ENCODE measurements at regions of chr13 and their contacts with region 1.

Region 1: GRCh38 chr13:67792151-67792676 is 562.1 kb upstream of the PCDH9 start:
- DNase-seq: no peak
- ATAC-seq: no peak
- H3K4me3 ChIP-seq: no peak overlapping the region
- H3K27ac ChIP-seq: no peak overlapping the region
- H3K4me1 ChIP-seq: no peaks in the 10 kb centered on the region
- H3K27me3 ChIP-seq: no peaks in the 10 kb centered on the region
- CTCF ChIP-seq: no peak

Region 2: DNA sequence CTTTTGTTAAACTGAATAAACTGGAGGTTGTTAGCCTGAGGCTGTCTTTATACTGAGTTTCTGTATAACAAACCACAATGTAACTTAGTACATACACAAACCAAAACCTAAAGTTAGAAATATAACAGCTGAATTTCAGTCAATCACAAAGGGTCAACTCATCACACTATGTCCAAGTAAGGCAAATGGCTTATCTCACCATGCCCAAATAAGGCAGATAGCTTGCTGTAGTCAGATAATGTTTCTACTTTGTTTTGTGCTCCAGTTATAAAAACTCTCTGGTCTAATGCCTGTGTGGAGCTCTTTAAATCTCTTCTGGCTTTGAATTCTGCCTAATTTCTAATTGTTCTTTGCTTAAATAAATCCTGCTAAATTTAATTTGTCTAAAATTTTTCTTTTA is 992.1 kb after region 1 on chr13:
- intact Hi-C with region 1: loop called in 1 of 10 experiments (anchors 5 kb)
- DNase-seq: no peak
- ATAC-seq: no peak
- H3K4me3 ChIP-seq: no peak overlapping the region
- H3K27ac ChIP-seq: no peak overlapping the region
- H3K4me1 ChIP-seq: no peaks in the 10 kb centered on the region
- H3K27me3 ChIP-seq: no peaks in the 10 kb centered on the region
- CTCF ChIP-seq: no peak